BJ (cell line): ENCODE measurements at regions of chr1 and their contacts with region 1.

Region 1: DNA sequence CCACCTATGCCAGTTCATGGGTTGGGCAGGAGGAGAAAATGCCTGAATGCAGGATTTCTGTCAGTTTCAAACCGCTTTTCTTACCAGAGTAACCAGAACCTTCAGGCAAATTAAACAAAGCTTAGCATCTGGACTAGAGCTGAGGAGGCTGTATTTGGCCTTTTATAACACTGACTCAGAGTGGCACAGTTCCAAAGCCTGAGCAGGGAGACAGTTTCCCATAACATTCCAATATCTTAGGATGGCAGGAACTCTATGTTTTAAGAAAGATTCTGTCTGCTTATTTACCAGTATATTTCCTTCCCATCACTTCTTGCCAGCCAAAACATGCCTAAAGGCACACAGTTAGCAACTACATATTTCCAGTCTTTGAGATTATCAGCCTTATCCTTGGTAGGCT is 46.8 kb downstream of the UBR4 start:
- DNase-seq: peak; percentile 88
- H3K4me3 ChIP-seq: no peak overlapping the region
- H3K27me3 ChIP-seq: no peaks in the 10 kb centered on the region
- CTCF ChIP-seq: no peak

Region 2: GRCh38 chr1:19139711-19140110 is 23.6 kb before region 1 on chr1:
- CTCF ChIA-PET with region 1: interaction called, 12 read pairs
- POLR2A ChIA-PET with region 1: no interaction called
- DNase-seq: no peak
- H3K4me3 ChIP-seq: no peak overlapping the region
- H3K27me3 ChIP-seq: no peaks in the 10 kb centered on the region
- CTCF ChIP-seq: no peak